Activated naive CD4-positive, alpha-beta T cell treated with anti-CD3 and anti-CD28 coated beads, Interleukin-2, amount 10 ng/mL, durations not matched to agents 7 days and 5 days (primary cell): ENCODE measurements at regions of chr12 and their contacts with region 1.

Region 1: GRCh38 chr12:69290545-69291277 is 51.3 kb downstream of the CPSF6 start:
- DNase-seq: peak; percentile 90
- H3K4me3 Mint-ChIP-seq: no peak overlapping the region
- H3K27ac Mint-ChIP-seq: no peak overlapping the region
- H3K4me1 Mint-ChIP-seq: peaks cover 5% of the 10 kb centered on the region
- H3K27me3 Mint-ChIP-seq: peaks cover 35% of the 10 kb centered on the region

Region 2: GRCh38 chr12:69330475-69331473 is 40.1 kb after region 1 on chr12:
- CTCF ChIA-PET with region 1: interaction called, 10 read pairs
- DNase-seq: peak; percentile 79
- H3K4me3 Mint-ChIP-seq: peak overlapping the region; percentile 82
- H3K27ac Mint-ChIP-seq: peak overlapping the region; percentile 98
- H3K4me1 Mint-ChIP-seq: peaks cover 67% of the 10 kb centered on the region
- H3K27me3 Mint-ChIP-seq: no peaks in the 10 kb centered on the region